Transverse colon (tissue), 4 donors: ENCODE measurements at regions of chr1 and their contacts with region 1.

Region 1: DNA sequence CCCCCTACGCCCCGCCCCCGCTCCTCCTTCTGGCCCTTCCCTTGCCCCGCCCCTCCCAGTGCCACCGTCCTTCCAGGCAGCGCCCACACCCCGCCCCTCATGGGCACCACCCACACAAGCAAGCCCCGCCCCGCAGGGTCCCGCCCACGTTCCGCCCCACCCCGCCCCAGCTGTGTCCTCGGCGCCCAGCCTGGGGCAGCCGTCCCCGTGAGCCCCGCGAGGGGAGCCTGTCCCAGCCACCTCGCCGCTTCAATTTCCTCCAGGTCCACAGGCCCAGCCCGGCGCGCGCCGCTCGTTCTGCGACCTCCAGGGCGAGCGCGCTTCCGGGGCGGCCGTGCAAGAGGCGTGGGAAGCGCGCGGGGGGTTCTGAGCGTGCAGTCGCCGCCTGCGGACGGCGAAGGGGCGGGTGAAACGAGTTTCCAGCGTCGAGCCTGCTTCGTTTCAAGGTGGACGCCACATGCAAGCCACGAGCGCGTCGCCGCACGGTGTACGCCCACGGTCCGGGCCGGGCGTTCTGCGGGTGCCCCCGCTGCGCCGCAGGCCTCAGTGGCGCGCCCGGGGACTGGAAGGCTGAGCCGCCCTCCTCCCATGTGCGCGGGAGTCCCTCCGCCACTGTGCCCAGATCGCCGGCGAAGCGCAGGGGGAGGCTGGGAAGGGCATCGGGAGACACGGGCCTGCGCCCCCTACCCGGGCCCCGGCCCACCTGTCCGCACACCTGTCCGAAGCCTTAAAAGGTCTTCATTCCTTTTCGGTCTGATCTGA is 10.8 kb upstream of the FAAP20 start:
- DNase-seq: peak; percentile 98
- H3K4me3 ChIP-seq: peak overlapping the region; percentile 42 to 59 (median 51)
- H3K27ac ChIP-seq: peak overlapping the region; percentile 76 to 92 (median 90)
- H3K4me1 ChIP-seq: peaks cover 27 to 56% (median 41%) of the 10 kb centered on the region in 4 donors
- H3K27me3 ChIP-seq: no peaks in the 10 kb centered on the region
- CTCF ChIP-seq: peak in 3 of 5 experiments; percentile 13 to 40 (median 25)
- EP300 ChIP-seq: no peak
- POLR2A ChIP-seq: peak; percentile 51

Region 2: GRCh38 chr1:2314803-2315673 is 109.7 kb after region 1 on chr1:
- in situ Hi-C with region 1: loop called in 2 of 4 experiments (anchors 25 kb)
- intact Hi-C with region 1: no loop called
- DNase-seq: peak; percentile 58
- H3K4me3 ChIP-seq: peak overlapping the region; percentile 45 to 64 (median 55)
- H3K27ac ChIP-seq: peak overlapping the region; percentile 85 to 91 (median 88)
- H3K4me1 ChIP-seq: peaks cover 32 to 62% (median 44%) of the 10 kb centered on the region in 4 donors
- H3K27me3 ChIP-seq: peaks cover 9% of the 10 kb centered on the region
- CTCF ChIP-seq: peak; percentile 67 to 100 (median 99)
- EP300 ChIP-seq: no peak
- POLR2A ChIP-seq: no peak

Region 3: GRCh38 chr1:2372551-2373490 is 167.4 kb after region 1 on chr1:
- in situ Hi-C with region 1: loop called in 1 of 4 experiments (anchors 10 kb)
- intact Hi-C with region 1: no loop called
- DNase-seq: peak; percentile 4
- H3K4me3 ChIP-seq: no peak overlapping the region
- H3K27ac ChIP-seq: no peak overlapping the region
- H3K4me1 ChIP-seq: no peaks in the 10 kb centered on the region
- H3K27me3 ChIP-seq: no peaks in the 10 kb centered on the region
- CTCF ChIP-seq: no peak
- EP300 ChIP-seq: no peak
- POLR2A ChIP-seq: no peak